HepG2 (cell line): ENCODE measurements at regions of chr21 and their contacts with region 1.

Region 1: GRCh38 chr21:37654596-37654995 is 261.7 kb downstream of the KCNJ6 start:
- DNase-seq: no peak
- ATAC-seq: no peak
- H3K4me3 ChIP-seq: no peak overlapping the region
- H3K27ac ChIP-seq: no peak overlapping the region
- H3K4me1 ChIP-seq: peaks cover 2% of the 10 kb centered on the region; the same call in 1 of the 2 replicates
- H3K27me3 ChIP-seq: no peaks in the 10 kb centered on the region; a peak in 1 of 5 replicates
- CTCF ChIP-seq: no peak
- EP300 ChIP-seq: no peak
- POLR2A ChIP-seq: no peak
- RAD21 ChIP-seq: no peak

Region 2: GRCh38 chr21:36776981-36777617 is 877.5 kb before region 1 on chr21:
- CTCF ChIA-PET with region 1: no interaction called
- POLR2A ChIA-PET with region 1: no interaction called
- in situ Hi-C with region 1: no loop called
- intact Hi-C with region 1: loop called (anchors 5 kb)
- DNase-seq: no peak
- ATAC-seq: no peak
- H3K4me3 ChIP-seq: no peak overlapping the region
- H3K27ac ChIP-seq: no peak overlapping the region
- H3K4me1 ChIP-seq: peaks cover 14% of the 10 kb centered on the region
- H3K27me3 ChIP-seq: no peaks in the 10 kb centered on the region
- CTCF ChIP-seq: no peak
- EP300 ChIP-seq: no peak
- POLR2A ChIP-seq: no peak
- RAD21 ChIP-seq: no peak